Kidney (tissue), 22 donors: ENCODE measurements at regions of chr6 and their contacts with region 1.

Region 1: GRCh38 chr6:159646733-159647132 is 46.3 kb downstream of the SOD2 start:
- DNase-seq: peak in 2 of 5 donors; percentile 38 to 63
- H3K4me3 ChIP-seq: no peak overlapping the region
- H3K27ac ChIP-seq: no peak overlapping the region
- H3K4me1 ChIP-seq: no peaks in the 10 kb centered on the region
- H3K27me3 ChIP-seq: no peaks in the 10 kb centered on the region
- CTCF ChIP-seq: no peak

Region 2: DNA sequence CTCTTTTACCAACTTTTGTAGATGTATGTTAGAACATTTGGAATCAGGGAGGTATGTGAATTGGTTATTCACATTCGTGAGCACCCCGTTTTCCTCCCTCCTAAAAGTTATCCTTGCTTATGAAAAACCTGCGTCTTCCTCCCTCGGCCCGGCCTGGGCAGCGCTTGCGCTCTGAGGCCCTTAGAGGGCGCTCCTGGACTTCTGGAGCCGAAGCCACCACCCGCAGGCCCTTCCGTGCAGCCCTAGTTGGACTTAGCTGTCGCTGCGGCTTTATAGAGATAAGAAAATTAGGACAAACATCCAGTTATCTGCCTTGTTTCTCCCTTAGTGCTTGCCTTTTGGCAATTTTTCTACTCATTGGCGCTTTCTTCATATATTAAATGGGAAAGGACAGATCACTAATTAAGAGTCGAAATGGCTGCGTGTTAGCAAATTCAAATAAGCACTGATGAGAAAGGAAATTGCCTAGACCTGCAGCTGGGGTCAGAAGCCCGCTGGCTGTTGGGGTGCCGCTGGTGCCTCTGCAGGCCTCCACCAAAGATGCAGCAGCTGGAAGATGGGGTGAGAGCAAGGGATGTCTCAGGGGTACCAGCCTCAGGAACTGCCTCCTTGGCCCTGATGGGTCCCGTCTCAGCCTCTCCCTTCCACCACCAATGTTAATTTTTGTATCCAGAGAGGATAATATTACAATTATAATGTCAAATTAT is 472.3 kb before region 1 on chr6:
- intact Hi-C with region 1: loop called (anchors 10 kb)
- DNase-seq: peak; percentile 73 to 90 (median 83)
- H3K4me3 ChIP-seq: no peak overlapping the region
- H3K27ac ChIP-seq: no peak overlapping the region
- H3K4me1 ChIP-seq: peaks cover 0 to 3% (median 0%) of the 10 kb centered on the region in 3 donors
- H3K27me3 ChIP-seq: peaks cover 11% of the 10 kb centered on the region
- CTCF ChIP-seq: peak; percentile 80

Region 3: DNA sequence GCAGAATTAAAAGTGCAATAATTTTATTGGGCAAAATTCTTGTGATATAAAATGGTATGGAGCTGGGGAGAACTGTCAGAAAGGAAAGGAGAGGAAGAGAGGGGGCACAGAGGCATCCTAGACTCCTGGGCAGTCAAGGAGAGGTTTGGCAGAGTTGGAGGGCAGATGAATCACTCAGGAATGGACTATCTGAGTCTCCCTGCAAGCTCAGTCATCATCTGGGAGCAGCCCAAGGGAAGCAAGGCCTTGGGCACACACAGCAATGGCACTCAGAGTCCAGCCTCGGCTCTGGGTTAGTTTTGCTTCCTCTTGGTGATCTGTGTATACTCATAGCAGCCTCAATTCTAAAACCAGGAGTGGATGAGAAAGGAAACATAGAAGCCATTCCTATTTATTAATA is 542.0 kb after region 1 on chr6:
- intact Hi-C with region 1: no loop called
- DNase-seq: no peak
- H3K4me3 ChIP-seq: no peak overlapping the region
- H3K27ac ChIP-seq: no peak overlapping the region
- H3K4me1 ChIP-seq: no peaks in the 10 kb centered on the region
- H3K27me3 ChIP-seq: no peaks in the 10 kb centered on the region
- CTCF ChIP-seq: no peak